Motor neuron (in vitro differentiated cells): ENCODE measurements at regions of chr20 and their contacts with region 1.

Region 1: DNA sequence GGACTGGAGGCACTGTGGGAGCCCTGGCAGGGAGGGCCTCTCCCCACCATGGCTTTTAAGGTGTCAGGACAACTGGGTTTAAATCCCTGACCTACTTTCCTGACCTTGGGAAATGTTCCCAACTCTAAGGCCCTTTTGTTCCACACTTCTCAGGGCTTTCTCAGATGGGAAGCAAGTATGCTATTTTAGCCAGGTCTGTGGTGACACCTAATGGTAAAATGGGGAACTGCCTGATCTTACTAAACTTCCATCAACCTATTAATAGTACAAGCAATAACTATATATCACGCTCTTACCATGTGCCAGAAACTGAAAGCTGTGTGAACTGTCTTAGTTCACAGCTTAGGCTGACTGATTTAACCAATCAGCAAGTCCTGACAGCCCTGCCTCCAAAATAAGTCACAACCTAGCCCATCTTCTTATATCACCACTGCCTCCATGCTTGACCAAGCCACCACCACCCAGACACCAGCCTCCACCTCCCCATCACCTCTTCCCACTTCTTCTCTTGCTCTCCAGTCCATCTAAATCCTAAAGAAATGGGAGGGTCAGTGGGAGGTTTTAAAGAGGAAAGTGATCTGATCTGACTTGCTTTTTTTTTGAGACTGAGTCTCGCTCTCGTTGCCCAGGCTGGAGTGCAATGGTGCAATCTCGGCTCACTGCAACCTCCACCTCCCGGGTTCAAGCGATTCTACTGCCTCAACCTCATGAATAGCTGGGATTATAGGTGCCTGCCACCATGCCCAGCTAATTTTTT is 6.9 kb upstream of the BLCAP start:
- ATAC-seq: peak; percentile 86 to 97 (median 94)
- H3K4me3 ChIP-seq: no peak overlapping the region
- H3K27ac ChIP-seq: no peak overlapping the region
- H3K4me1 ChIP-seq: peaks cover 2 to 4% of the 10 kb centered on the region in 2 donors

Region 2: DNA sequence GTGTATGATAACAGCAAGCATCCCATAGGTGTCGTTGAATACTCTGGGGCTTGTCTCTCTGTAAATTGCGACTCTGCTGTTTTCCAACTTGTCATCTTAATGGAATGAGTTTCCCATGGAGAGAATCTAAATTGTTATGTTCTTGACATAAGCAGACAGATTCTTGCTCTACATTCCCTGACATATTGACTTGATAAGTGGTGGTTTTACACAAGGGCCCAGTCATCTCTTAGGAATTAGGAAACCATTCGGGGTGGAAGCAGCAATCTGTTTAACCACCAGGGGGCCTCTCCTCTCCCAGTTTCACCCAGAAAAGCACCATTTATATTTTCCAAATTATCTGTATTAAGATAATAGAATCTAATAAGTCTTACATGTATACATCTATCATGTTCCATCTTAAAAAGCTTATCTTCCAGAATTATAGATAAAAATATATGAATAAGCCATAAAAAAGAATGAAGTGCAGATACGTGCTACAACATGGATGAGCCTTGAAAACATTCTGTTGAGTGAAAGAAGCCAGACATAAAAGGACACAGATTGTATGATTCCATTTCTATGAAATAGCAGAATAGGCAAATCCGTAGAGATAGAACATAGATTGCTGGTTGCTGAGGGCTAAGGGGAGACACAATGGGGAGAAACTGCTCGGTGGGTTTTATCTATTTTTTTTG is 332.2 kb before region 1 on chr20:
- in situ Hi-C with region 1: loop called in 6 of 9 experiments (anchors 10 to 25 kb)
- ATAC-seq: peak in 5 of 8 experiments; percentile 30 to 99 (median 75)
- H3K4me3 ChIP-seq: no peak overlapping the region
- H3K27ac ChIP-seq: no peak overlapping the region
- H3K4me1 ChIP-seq: peaks cover 0 to 17% of the 10 kb centered on the region in 2 donors

Region 3: DNA sequence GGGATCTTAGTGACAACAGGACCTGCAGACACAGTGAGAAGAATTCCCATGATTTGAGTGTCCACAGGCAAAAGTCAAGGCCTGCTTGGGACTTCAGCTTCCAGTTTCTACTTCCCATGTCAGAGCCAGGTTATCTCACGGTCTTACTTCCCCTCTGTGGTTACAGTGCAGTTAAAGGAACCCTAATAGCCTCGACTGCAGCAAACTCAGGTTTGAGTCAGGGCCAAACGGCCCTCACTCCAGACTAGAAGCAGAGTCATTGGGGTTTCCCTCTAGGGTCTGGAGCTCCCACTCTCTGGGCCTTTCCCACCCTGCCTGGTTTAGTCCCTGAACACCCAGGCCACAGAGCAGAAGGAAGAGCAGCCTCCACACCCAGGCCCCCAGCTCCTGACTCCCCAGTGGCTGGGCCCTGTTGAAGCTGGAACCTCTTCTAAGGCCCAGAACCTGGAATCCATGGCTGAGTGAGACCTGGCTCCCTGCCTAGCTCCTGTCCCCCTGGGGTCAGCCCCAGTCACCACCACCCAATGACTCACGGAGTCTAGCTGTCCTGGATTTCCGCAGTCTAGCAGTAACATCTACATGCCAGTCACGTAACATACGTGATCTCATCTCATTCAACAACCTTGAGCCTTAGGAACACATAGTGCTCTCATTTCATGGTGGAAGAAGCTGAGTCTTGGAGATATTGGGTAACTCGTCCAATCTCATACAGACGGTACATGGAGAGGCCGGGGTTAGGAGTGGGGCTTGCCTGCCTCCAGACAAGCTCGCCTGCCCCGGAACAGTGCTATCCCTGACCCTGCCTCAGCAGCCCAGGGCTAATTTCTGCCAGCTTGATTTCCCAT is 263.8 kb before region 1 on chr20:
- in situ Hi-C with region 1: loop called in 7 of 9 experiments (anchors 5 to 25 kb)
- ATAC-seq: no peak
- H3K4me3 ChIP-seq: no peak overlapping the region
- H3K27ac ChIP-seq: no peak overlapping the region
- H3K4me1 ChIP-seq: peaks cover 18 to 19% of the 10 kb centered on the region in 2 donors

Region 4: GRCh38 chr20:37282556-37282955 is 252.0 kb before region 1 on chr20:
- in situ Hi-C with region 1: loop called in 4 of 9 experiments (anchors 10 kb)
- ATAC-seq: peak in 4 of 8 experiments; percentile 35 to 93 (median 92)
- H3K4me3 ChIP-seq: no peak overlapping the region
- H3K27ac ChIP-seq: no peak overlapping the region
- H3K4me1 ChIP-seq: peaks cover 6 to 8% of the 10 kb centered on the region in 2 donors